Lower leg skin (tissue), 4 donors: ENCODE measurements at regions of chr22 and their contacts with region 1.

Region 1: GRCh38 chr22:41752011-41752970 is 48.2 kb upstream of the CCDC134 start:
- DNase-seq: no peak
- H3K4me3 ChIP-seq: no peak overlapping the region
- CTCF ChIP-seq: no peak
- POLR2A ChIP-seq: no peak

Region 2: DNA sequence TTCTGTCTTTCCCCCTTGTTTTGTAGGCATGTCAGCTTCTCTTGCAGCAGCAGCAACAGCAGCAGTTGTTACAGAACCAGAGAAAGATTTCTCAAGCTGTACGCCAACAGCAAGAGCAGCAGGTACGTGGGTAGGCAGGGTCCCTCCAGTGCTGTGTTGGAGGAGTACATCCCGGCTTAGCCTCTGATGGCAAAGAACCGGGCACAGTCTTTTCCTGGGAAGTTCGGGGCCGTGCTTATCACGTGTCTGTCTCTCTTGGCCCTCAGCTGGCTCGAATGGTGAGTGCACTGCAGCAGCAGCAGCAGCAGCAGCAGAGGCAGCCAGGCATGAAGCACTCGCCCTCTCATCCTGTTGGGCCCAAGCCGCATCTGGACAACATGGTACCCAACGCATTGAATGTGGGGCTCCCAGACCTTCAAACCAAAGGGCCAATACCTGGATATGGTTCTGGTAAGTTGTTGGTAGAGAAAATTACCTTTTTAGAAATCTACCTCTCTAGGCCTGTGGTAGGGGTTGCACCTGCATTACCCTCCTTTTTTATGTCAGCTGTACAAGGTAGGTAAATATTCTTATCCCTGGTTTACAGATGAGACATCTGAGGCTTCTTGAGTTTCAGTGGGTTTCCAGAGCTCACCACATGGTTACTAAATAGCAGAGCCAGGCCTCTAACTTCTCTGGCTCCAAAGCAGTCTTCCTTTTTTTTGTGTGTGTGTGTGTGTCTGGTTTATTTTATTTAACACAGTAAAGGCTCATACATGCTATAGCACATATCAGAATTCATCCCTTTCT is 1451.2 kb before region 1 on chr22:
- intact Hi-C with region 1: loop called (anchors 5 kb)
- DNase-seq: no peak
- H3K4me3 ChIP-seq: no peak overlapping the region
- CTCF ChIP-seq: no peak
- POLR2A ChIP-seq: no peak

Region 3: DNA sequence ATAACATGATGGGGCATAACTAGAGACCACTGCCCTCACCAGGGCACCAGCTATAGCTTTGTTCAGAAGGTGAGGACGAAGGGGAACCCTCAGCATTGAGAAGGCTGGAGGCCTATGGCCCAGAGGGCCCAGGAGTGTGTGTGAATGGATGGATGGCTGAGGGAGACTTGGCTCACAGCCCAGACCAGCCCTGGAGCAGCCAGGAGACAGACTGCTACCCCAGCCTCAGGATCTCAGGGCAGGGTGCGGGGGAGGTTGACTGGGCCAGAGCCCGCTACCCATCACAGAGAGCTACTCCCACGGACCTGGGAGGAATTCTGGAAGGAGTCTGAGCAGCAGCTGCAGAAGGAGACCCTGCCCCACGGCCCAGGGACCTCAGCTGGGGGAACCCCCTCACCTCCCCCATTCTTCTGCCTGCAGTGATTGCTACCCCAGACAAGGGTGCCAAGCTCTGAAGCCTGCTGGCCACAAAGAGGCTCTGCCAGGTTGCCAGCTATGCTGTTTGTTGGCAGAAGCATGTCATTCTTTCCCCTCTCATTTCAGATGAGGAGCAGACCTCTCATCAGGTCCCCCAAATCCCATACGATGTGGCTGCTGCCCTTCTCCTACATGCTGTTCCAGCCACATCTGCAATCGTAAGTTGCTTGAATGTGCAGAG is 196.8 kb before region 1 on chr22:
- intact Hi-C with region 1: no loop called
- DNase-seq: no peak
- H3K4me3 ChIP-seq: no peak overlapping the region
- CTCF ChIP-seq: no peak
- POLR2A ChIP-seq: no peak

Region 4: GRCh38 chr22:41888627-41889200 is 136.4 kb after region 1 on chr22:
- intact Hi-C with region 1: no loop called
- DNase-seq: no peak
- H3K4me3 ChIP-seq: no peak overlapping the region
- CTCF ChIP-seq: no peak
- POLR2A ChIP-seq: no peak

Region 5: DNA sequence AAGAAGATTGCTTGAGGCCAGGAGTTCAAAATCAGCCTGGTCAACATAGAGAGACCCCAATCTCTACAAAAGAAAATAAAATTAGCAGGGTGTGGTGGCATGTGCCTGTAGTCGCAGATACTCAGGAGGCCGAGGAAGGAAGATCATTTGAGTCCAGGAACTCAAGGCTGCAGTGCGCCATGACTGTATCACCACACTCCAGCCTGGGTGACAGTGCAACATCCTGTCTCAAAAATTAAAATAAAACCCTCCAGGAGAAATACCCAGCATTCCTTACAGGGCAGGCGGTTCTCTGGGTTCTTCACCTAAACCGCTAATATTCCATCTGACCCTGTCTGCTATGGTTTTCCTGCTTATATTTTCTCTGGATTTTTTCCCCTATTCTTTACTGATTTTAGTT is 504.6 kb after region 1 on chr22:
- intact Hi-C with region 1: no loop called
- DNase-seq: no peak
- H3K4me3 ChIP-seq: no peak overlapping the region
- CTCF ChIP-seq: no peak
- POLR2A ChIP-seq: no peak